ENCODE measurements at regions of chr2 and their contacts with region 1.

Region 1: DNA sequence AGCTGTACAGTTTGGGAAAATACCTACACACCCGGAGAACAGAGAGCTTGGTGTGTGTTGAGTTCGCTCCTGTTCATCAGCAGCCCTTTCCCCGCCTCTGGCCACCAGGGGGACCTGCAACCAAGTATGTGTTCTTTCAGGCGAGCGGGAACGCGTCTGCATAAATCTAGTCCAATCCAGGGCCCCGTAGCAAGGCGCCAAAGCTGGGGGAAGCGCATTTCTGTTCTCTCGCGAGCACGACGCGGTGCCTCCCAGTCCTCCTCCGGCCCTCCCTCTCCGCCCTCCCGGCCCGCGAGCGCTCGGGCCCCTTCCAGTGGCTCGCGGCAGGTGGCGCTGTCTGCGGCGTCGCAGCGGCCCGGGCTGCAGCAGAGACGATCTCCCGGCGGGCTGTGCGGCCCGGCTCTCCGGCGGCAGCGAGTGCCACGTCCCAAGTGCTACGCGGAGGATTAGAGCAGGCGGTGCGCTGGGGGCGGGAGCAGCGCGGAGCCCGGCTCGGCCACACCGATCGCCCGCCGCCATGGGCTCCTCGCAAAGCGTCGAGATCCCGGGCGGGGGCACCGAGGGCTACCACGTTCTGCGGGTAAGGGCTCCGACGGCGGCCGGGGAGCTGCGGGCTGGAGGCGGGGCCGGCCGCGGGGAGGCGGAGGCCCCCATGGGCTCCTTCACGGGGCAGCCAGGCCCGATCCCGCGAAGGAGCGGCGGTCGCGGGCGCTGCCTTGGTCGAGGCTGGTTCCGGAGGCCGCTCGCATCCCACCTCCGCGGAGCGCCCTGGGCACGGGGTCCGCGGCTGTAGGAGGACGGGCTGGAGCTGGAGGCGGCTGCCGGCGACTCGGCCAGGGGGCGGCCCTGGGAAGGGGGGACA is at the start of gene GORASP2:
- DNase-seq: peak; percentile 98
- H3K4me3 ChIP-seq: peak within 1 kb of the TSS; percentile 95 to 96
- H3K27ac ChIP-seq: peak within 1 kb of the TSS; percentile 90 to 92
- H3K4me1 ChIP-seq: peaks cover 10 to 16% of the 10 kb centered on the region in 2 experiments
- H3K27me3 ChIP-seq: no peaks in the 10 kb centered on the region
- CTCF ChIP-seq: peak; percentile 89
- EP300 ChIP-seq: no peak; a peak in 1 of 4 replicates
- RAD21 ChIP-seq: peak; percentile 62
- polyA plus RNA-seq, gene GORASP2: 127 and 148 TPM in 2 replicates

Region 2: DNA sequence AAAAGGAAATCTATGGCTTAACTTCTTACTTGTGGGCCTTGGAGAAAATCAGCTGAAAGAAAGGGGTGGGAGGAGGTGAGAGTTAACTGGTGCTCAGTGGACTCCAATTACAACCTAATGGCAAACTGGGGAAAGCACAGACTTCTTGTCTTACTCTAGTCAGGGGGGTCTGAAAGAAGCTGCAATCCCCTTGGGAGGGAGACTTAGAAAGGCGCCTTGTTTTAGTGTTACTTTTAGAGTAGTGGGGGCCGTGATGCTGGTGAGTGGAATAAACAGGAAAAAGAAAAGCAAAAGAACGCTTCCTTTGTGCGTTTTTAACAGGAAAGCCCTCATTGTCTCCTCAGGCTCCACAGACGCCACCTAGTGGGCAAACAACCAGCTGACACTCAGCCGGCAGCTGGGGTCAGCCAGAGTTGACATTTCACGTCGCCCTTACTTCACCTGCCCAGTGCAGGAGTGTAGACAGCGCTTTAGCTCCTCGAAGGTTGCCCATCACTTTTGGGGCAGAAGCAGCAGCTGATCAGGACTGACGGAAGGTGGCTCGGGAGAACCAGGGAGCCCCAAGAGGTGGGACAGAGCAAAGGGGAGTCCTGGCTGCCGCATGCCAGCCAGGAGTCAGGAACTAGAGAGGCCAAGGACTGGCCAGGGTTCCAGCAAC is 55.9 kb before region 1 on chr2:
- CTCF ChIA-PET with region 1: interaction called, 12 read pairs
- POLR2A ChIA-PET with region 1: no interaction called
- DNase-seq: peak; percentile 81
- H3K4me3 ChIP-seq: peak overlapping the region; percentile 15 to 46; a peak in 3 of 4 replicates
- H3K27ac ChIP-seq: no peak overlapping the region
- H3K4me1 ChIP-seq: peaks cover 0 to 3% of the 10 kb centered on the region in 2 experiments; a peak in 1 of 4 replicates
- H3K27me3 ChIP-seq: no peaks in the 10 kb centered on the region
- CTCF ChIP-seq: peak; percentile 97
- EP300 ChIP-seq: no peak
- RAD21 ChIP-seq: peak; percentile 63

Region 3: DNA sequence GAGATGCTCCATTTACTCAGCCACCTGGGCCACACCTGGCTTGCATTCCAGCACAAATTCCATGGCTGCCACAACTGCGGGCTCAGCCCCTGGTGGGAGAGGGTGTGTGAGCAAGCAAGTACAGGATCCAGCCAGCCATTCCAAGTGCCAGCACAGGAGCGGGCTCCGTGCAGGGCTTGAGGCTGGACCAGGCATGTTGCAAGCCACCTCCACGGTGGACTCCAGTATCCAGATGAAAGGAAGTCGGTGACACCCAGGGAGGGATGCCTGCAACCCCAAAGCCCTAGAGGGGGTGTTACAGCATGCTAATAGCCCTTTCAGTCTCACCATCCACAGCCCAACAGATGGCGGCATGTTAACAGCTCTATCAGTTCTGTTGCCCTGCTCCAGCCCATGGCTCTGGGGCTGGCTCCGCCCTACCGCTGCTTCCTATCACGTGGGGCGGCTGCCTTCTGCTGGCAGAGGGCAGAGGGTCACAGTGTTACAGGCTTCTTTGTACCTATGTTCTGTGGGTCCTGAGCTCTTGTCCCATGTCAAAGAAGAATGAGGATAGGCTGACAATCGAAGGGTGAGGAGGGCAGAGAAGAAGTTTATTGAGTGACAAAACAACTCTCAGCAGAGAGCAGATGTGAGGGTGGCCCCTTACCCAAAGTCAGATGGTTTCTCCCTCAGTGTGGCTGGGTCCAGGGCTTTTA is 11.7 kb before region 1 on chr2:
- CTCF ChIA-PET with region 1: interaction called, 20 read pairs
- POLR2A ChIA-PET with region 1: no interaction called
- DNase-seq: no peak
- H3K4me3 ChIP-seq: no peak overlapping the region
- H3K27ac ChIP-seq: no peak overlapping the region
- H3K4me1 ChIP-seq: no peaks in the 10 kb centered on the region
- H3K27me3 ChIP-seq: no peaks in the 10 kb centered on the region
- CTCF ChIP-seq: no peak
- EP300 ChIP-seq: no peak
- RAD21 ChIP-seq: no peak

Region 4: GRCh38 chr2:170950221-170950761 is 21.2 kb after region 1 on chr2:
- CTCF ChIA-PET with region 1: interaction called, 11 read pairs
- POLR2A ChIA-PET with region 1: no interaction called
- DNase-seq: no peak
- H3K4me3 ChIP-seq: no peak overlapping the region
- H3K27ac ChIP-seq: no peak overlapping the region
- H3K4me1 ChIP-seq: no peaks in the 10 kb centered on the region
- H3K27me3 ChIP-seq: no peaks in the 10 kb centered on the region
- CTCF ChIP-seq: no peak
- EP300 ChIP-seq: no peak
- RAD21 ChIP-seq: no peak

Region 5: GRCh38 chr2:170973492-170974303 is 44.6 kb after region 1 on chr2:
- CTCF ChIA-PET with region 1: interaction called, 30 read pairs
- POLR2A ChIA-PET with region 1: no interaction called
- DNase-seq: peak; percentile 99
- H3K4me3 ChIP-seq: peak overlapping the region; percentile 69 to 72
- H3K27ac ChIP-seq: peak overlapping the region; percentile 47 to 91; a peak in 3 of 4 replicates
- H3K4me1 ChIP-seq: peaks cover 5 to 14% of the 10 kb centered on the region in 2 experiments; a peak in 2 of 4 replicates
- H3K27me3 ChIP-seq: no peaks in the 10 kb centered on the region
- CTCF ChIP-seq: peak; percentile 85
- EP300 ChIP-seq: 0 out of 4 replicates have a peak, but pooled peaks of 1 of the 2 experiments have one; percentile 7
- RAD21 ChIP-seq: peak; percentile 85

Region 6: DNA sequence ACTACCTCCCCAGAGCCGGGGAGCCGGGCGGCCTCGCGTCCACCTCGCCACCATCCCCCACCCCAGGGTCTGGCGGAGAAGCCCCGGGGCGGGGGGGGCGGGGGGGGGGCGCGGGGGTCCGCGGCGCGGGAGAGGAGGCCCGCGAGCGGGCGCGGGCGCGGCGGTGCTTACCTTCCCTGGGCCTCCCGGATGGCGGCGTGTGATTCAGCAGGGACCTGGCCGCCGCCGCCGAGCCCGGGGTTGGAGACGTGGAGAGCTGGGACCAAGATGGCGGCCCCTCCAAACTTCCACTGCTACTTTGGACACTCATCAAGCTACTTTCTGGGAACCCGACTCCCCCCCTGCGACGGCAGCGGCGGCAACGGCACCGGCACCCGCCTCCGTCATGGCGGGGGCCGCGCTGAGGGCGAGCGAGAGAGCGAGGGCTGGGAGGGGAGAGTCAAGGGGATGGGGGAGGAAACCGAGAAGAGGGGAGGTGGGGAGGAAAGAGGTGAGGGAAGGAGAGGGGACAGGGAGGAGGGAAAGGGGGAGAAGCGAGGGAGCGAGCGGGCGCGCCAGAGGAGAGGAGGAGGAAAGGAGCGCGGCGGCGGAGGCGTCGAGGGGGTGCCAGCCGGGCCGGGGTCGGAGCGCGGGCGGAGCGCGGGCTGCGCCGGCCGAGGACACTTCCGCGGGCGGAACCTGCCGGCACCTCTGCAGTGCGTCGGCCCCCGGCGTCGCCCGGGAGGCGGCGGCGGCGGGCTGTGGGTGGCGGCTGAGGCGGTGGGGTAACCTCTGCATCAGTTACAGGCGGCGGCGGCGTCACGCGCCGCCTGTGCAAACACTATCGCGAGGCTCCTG is 231.3 kb after region 1 on chr2 and contains the start of gene TLK1:
- CTCF ChIA-PET with region 1: interaction called, 17 read pairs
- POLR2A ChIA-PET with region 1: no interaction called
- DNase-seq: peak; percentile 81
- H3K4me3 ChIP-seq: peak within 1 kb of the TSS; percentile 90 to 99
- H3K27ac ChIP-seq: peak within 1 kb of the TSS; percentile 90 to 91
- H3K4me1 ChIP-seq: peaks cover 4 to 18% of the 10 kb centered on the region in 2 experiments; a peak in 2 of 4 replicates
- H3K27me3 ChIP-seq: no peaks in the 10 kb centered on the region
- CTCF ChIP-seq: no peak
- EP300 ChIP-seq: no peak; a peak in 1 of 4 replicates
- RAD21 ChIP-seq: no peak
- polyA plus RNA-seq, gene TLK1: 4.4 and 4.8 TPM in 2 replicates